Activated T-helper 1 cell treated with anti-CD3 and anti-CD28 coated beads, Interleukin-12 subunit alpha, Interleukin-12 subunit beta, Interleukin-2, Interleukin-4 antibody, amounts not matched to agents 30 ng/mL and 10 ng/mL and 1 ng/mL, durations not matched to agents 14 hours and 24 hours and 36 hours (primary cell): ENCODE measurements at regions of chr17 and their contacts with region 1.

Region 1: GRCh38 chr17:17237026-17237799 is at the start of gene FLCN:
- DNase-seq: peak; percentile 84
- H3K4me3 Mint-ChIP-seq: peak within 1 kb of the TSS; percentile 94
- H3K27ac Mint-ChIP-seq: peak within 1 kb of the TSS; percentile 99
- H3K4me1 Mint-ChIP-seq: peaks cover 25% of the 10 kb centered on the region
- H3K27me3 Mint-ChIP-seq: peaks cover 4% of the 10 kb centered on the region
- total RNA-seq, gene FLCN: 35.5 and 36.4 TPM in 2 replicates

Region 2: DNA sequence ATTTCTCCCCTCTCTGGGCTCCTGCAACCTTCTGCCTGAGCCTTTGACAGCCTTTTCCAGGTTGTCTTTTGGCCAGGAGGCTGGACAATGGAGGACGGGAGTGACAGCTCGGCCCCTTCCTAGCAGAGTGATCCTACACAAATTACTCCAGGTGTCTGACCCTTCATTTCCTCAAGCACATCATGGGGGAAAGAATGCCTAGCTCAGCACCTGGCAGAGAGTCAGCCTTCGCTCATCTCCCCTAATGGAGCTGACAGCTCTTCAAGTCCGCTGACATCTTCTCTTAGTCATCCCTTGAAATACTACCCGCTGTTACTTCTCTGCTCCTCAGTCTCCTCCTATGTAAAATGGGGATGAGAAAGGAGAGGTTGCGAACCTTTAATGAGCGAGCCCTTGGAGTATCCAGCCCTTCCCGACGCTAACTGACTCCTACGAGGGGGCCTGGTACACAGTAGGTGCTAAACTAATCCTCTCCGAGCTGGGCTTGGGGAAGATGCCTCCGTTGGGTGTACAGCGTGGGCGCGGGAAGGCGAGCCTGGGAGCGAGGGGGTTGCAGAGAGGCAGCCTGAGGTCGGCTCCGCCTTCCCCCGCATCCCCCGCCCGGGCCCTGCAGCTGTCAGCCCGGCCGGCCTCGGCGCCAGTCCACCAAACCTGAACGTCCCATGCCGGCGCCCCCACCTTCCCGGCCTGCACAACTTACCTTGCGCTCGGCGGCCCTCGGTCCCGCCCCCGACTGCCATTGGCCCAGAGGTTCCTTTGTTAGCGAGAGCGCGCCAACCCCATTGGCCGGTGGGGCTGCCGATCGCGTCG is 195.4 kb before region 1 on chr17:
- intact Hi-C with region 1: loop called (anchors 2 kb)
- DNase-seq: peak; percentile 94
- H3K4me3 Mint-ChIP-seq: peak overlapping the region; percentile 80
- H3K27ac Mint-ChIP-seq: no peak overlapping the region
- H3K4me1 Mint-ChIP-seq: peaks cover 38% of the 10 kb centered on the region
- H3K27me3 Mint-ChIP-seq: peaks cover 2% of the 10 kb centered on the region

Region 3: GRCh38 chr17:17151962-17152361 is 85.3 kb before region 1 on chr17:
- intact Hi-C with region 1: loop called (anchors 2 kb)
- DNase-seq: no peak
- H3K4me3 Mint-ChIP-seq: no peak overlapping the region
- H3K27ac Mint-ChIP-seq: peak overlapping the region; percentile 68
- H3K4me1 Mint-ChIP-seq: peaks cover 56% of the 10 kb centered on the region
- H3K27me3 Mint-ChIP-seq: no peaks in the 10 kb centered on the region

Region 4: DNA sequence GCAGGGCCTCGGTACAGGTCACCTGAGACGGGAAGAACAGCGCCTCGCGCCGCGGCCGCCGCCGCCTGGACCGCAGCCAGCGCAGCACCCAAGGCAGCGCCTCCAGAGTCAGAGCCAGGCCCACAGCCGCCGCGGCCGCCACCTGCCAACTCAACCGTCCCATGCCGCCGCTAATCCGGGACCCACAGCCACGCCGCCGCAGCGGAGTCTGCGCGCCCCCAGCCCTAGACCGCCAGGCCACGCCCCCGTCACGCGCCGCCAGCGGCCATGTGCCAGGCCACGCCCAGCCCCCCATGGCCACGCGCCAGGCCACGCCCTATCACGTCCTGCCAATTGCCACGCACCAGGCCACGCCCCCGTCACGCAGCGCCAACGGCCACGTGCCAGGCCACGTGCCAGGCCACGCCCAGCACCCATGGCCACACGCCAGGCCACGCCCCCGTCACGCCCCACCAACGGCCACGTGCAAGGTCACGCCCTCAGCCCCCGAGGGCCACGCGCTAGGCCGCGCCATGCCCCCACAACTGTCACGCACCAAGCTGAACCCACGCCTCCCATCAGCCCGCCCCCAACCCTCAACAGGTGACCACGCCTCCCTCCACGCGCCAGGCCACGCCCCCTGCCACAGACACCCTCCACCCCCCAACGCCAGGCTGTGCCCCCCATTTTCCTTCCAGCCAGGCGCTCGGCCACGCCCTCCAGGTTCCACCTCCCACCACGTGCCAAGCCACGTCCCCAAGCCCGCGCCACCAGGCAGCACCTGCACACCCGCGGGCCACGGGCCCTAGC is 30.9 kb before region 1 on chr17 and contains the start of gene PLD6:
- intact Hi-C with region 1: loop called (anchors 1 kb)
- DNase-seq: peak; percentile 80
- H3K4me3 Mint-ChIP-seq: peak within 1 kb of the TSS; percentile 87
- H3K27ac Mint-ChIP-seq: peak within 1 kb of the TSS; percentile 93
- H3K4me1 Mint-ChIP-seq: no peaks in the 10 kb centered on the region
- H3K27me3 Mint-ChIP-seq: no peaks in the 10 kb centered on the region
- total RNA-seq, gene PLD6: 18.5 and 20.5 TPM in 2 replicates

Region 5: GRCh38 chr17:17303010-17303846 is 66.0 kb after region 1 on chr17 and contains the start of gene NT5M:
- intact Hi-C with region 1: loop called (anchors 1 kb)
- DNase-seq: peak; percentile 72
- H3K4me3 Mint-ChIP-seq: peak within 1 kb of the TSS; percentile 90
- H3K27ac Mint-ChIP-seq: peak within 1 kb of the TSS; percentile 97
- H3K4me1 Mint-ChIP-seq: peaks cover 36% of the 10 kb centered on the region
- H3K27me3 Mint-ChIP-seq: no peaks in the 10 kb centered on the region
- total RNA-seq, gene NT5M: 5.1 and 5.8 TPM in 2 replicates